Transverse colon (tissue), 4 donors: ENCODE measurements at regions of chr1 and their contacts with region 1.

Region 1: GRCh38 chr1:165734906-165735305 is 33.8 kb downstream of the TMCO1 start:
- DNase-seq: no peak
- H3K4me3 ChIP-seq: no peak overlapping the region
- H3K27ac ChIP-seq: no peak overlapping the region
- H3K4me1 ChIP-seq: no peaks in the 10 kb centered on the region
- H3K27me3 ChIP-seq: no peaks in the 10 kb centered on the region
- CTCF ChIP-seq: no peak
- EP300 ChIP-seq: no peak
- POLR2A ChIP-seq: no peak

Region 2: GRCh38 chr1:166053395-166053794 is 318.5 kb after region 1 on chr1:
- in situ Hi-C with region 1: no loop called
- intact Hi-C with region 1: loop called (anchors 5 kb)
- DNase-seq: no peak
- H3K4me3 ChIP-seq: no peak overlapping the region
- H3K27ac ChIP-seq: no peak overlapping the region
- H3K4me1 ChIP-seq: no peaks in the 10 kb centered on the region
- H3K27me3 ChIP-seq: no peaks in the 10 kb centered on the region
- CTCF ChIP-seq: no peak
- EP300 ChIP-seq: no peak
- POLR2A ChIP-seq: no peak